ENCODE measurements at regions of chr3 and their contacts with region 1.

Region 1: GRCh38 chr3:181264486-181264885 is 274.9 kb upstream of the DNAJC19 start:
- DNase-seq: no peak
- ATAC-seq: no peak
- H3K4me3 ChIP-seq: no peak overlapping the region
- H3K27ac ChIP-seq: no peak overlapping the region
- H3K4me1 ChIP-seq: no peaks in the 10 kb centered on the region
- H3K27me3 ChIP-seq: no peaks in the 10 kb centered on the region
- CTCF ChIP-seq: no peak

Region 2: DNA sequence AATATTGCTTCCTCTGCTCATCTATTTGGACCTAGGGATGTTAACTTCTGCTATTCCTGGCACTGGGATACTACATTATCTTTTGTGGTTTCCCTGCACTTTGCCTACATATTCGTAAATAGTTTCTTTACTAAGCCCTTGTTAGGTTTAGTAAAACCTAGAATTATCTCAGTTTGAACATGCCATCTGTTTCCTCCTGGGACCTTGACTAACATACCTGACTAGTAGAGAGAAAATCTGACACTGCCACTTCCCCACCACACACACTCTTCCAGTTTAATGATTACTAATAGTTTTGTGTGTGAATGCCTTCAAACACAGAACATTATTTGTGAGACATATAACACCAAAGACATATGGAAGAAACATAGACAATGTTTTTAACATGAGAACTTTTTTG is 419.1 kb after region 1 on chr3:
- intact Hi-C with region 1: loop called in 1 of 10 experiments (anchors 5 kb)
- DNase-seq: no peak
- ATAC-seq: no peak
- H3K4me3 ChIP-seq: no peak overlapping the region
- H3K27ac ChIP-seq: no peak overlapping the region
- H3K4me1 ChIP-seq: no peaks in the 10 kb centered on the region
- H3K27me3 ChIP-seq: peaks cover 0 to 23% (median 0%) of the 10 kb centered on the region in 7 donors
- CTCF ChIP-seq: no peak